SK-N-SH (cell line): ENCODE measurements at regions of chr4 and their contacts with region 1.

Region 1: GRCh38 chr4:18689308-18690115 is 668.0 kb upstream of the LCORL start:
- DNase-seq: peak; percentile 27
- H3K4me3 ChIP-seq: peak overlapping the region in 1 of 2 experiments; percentile 26; a peak in 1 of 4 replicates
- H3K27ac ChIP-seq: no peak overlapping the region
- H3K4me1 ChIP-seq: no peaks in the 10 kb centered on the region; a peak in 2 of 4 replicates
- H3K27me3 ChIP-seq: no peaks in the 10 kb centered on the region
- CTCF ChIP-seq: peak; percentile 92
- EP300 ChIP-seq: no peak
- RAD21 ChIP-seq: peak; percentile 92

Region 2: DNA sequence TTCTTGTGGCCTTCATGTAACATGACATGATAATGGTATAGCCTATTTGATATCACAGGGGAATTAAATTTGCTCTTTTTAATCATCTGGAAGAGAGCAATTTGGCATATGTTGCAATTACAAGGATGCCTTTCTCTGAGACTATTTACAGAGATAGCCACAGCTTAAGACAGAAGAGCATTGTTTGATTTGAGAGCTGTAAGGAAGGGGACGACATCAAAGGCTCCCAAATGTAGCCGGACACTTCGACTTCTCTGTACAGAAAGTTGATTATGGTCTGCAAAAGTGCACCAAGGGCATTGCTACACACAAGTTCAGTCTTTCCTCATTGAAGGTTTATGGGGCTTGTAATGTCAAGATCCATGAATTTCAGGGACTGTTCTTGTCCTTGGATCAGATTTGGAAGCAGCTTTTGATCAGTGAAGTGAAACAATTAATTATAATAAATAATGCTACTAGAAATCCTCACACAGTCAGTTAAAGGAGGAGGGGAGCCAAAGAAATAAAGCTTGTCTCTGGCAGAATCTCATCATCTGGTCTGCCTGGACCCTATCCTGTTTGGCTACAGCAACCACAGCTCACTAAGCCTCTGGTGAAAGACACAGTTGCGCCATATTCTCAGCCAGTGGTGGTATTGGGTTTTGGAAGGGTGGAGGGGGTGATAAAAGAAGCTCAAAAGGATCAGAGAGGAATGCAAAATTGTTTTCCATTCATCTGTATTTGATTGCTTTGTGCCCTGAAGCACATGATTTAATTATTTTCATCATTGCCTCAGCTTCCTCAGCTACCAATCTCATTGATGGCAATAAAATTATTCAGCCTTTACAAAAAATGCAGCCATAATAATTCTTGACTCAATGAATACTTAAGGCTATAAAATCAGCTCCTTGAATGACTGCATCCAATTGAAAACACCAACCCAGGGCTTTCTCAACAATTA is 13.7 kb before region 1 on chr4:
- CTCF ChIA-PET with region 1: interaction called, 10 read pairs
- POLR2A ChIA-PET with region 1: no interaction called
- DNase-seq: no peak
- H3K4me3 ChIP-seq: no peak overlapping the region
- H3K27ac ChIP-seq: no peak overlapping the region
- H3K4me1 ChIP-seq: no peaks in the 10 kb centered on the region
- H3K27me3 ChIP-seq: no peaks in the 10 kb centered on the region
- CTCF ChIP-seq: no peak
- EP300 ChIP-seq: no peak
- RAD21 ChIP-seq: no peak